Posterior cingulate gyrus (tissue), 11 donors: ENCODE measurements at regions of chr11 and their contacts with region 1.

Region 1: GRCh38 chr11:727859-728748 is 19.2 kb upstream of the TALDO1 start:
- DNase-seq: peak; percentile 60 to 97 (median 82)

Region 2: DNA sequence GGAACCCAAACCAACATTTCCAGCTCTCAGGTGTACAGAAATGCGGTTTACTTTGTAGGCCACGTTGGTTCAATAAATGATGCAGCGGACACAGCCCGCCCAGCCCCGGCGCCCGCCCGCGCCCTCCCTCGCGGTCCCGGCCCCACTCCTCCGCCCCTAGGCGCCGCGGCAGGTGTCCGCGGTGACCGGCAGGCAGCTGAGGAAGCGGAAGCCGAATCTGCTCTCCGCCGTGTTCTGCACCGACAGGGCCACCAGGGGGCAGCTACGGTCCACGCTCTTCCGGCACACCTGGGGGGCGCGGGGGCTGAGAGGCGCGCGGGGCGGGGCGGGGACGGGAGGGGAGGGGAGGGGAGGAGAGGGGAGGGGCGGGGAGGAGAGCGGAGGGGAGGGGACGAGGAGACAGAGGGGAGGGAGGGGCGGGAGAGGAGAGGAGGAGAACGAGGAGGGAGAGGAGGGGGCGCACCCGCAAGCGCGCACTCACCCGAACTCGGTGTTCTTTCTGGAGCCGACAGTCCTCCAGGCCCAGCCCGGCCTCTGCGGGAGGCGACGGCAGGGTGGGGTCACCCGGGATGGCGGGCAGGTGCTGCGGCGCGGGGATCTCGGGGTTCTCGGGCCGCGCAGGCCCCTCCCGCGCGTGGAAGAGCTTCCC is 173.2 kb before region 1 on chr11:
- intact Hi-C with region 1: loop called (anchors 5 kb)
- DNase-seq: peak in 2 of 10 donors; percentile 39 to 53

Region 3: DNA sequence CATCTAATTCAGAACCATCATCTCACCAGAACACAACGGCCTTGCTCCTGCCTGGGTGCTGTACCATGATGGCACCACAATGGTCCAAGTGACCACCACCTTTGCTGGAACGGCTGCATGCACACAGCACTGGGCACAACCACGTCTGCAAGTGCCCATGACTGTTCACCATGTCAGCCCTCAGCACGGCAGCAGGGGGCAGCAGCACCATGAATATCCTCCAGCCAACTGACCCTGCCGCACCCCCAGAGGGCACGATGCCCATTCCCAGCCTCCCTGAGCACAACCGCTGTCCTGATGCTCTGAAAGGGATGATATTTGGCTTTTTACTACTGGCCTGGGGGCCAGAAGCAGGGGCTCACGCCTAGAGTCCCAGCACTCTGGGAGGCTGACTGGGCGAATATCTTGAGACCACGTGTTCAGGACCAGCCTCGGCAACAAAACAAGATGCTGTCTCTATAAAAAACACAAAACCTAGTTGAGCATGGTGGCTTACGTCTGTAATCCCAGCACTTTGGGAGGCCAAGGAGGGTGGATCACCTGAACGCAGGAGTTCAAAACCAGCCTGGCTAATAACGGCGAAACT is 65.3 kb before region 1 on chr11:
- intact Hi-C with region 1: loop called (anchors 1 kb)
- DNase-seq: peak in 9 of 10 donors; percentile 49 to 95 (median 71)

Region 4: DNA sequence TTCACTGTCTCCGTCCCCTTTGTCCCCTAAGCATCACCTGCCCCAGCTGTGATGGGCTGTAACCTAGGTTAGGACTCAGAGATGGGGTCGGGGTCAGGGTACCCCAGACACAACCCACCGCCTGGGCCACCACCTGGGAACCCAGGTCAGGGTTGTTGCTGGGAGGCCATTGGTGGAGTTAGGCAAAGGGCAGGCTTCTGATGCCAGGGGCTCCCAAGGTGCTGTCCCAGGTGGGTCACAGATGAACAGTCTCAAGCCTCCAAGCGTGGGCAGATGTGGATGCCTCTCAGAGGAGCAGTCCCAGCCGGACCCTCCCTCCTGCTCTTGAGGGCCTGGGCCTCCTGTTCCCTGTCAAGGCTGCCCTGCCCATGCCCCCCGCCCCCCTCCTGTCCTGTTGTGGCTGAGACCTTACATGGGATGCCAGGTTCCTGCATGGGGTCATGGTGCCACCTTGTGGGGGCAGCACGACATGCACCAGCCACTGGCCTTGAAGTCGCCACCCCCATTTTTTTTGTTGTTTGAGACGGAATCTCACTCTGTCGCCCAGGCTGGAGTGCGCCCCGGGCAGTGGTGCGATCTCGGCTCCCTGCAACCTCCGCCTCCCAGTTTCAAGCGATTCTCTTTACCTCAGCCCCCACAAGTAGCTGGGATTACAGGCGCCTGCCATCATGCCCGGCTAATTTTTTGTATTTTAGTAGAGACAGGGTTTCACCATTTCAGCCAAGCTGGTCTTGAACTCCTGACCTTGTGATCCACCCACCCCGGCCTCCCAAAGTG is 37.1 kb after region 1 on chr11:
- intact Hi-C with region 1: loop called (anchors 5 kb)
- DNase-seq: peak in 6 of 10 donors; percentile 56 to 95 (median 70)

Region 5: DNA sequence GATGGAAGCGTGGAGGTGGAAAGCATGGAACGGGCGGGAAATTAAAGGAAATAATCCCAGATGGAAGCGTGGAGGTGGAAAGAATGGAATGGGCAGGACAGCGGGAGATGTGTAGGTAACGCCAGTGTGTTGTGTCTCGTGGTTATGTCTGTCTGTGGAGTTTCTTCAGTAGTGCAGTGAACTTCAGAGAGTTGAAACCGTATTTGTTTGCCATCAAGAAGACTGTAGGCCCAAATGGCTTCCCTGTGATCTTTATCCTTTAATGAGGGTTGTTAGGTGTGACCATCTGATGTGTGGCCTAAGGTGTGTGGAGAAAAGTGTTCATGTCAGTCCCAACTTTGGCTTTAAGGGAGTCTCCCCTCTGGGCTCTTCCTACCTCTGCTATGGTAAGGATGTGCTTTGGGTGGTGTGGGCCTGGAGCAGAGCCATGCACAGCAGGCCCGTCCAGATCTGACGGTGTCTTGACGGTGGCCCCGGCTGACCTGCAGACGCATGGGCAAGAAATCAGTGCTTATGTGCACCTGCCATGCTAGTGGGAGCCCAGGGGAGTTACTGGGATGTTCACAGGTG is 237.2 kb after region 1 on chr11:
- intact Hi-C with region 1: no loop called
- DNase-seq: peak in 1 of 10 donors; percentile 38

Region 6: DNA sequence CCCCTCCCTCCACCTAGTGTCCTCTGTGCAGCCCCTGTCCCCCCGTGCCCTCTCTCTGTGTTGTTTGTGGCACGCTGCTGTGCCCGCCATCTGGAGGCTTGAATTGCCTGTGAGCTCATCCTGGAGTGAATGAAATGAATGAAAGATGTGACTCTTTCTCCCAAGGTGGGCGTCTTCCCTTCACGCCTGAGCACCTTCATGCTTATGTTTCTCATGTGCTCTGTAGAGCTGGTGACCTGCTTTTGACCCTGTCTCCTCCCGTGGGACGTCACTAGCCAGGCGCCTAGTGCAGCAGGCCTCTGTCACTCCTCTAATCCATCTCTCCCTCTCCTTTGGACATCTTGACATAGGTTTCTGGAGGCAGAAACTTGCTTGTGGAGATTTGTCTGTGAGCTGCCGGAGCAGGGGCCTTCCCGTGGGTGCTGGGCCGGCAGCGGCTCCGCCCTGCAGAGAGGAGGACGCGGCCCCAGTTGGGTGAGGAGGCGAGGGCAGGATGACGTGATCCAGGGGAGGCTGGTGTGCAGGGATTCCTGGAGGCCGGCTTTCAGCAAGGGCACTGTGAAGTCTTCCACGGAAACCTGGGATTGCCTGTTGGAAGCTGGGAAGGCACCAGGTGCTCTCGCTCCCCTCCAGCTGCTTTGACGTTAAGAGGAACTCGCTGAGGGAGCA is 267.8 kb after region 1 on chr11:
- intact Hi-C with region 1: no loop called
- DNase-seq: no peak